ENCODE measurements at regions of chr12 and their contacts with region 1.

Region 1: GRCh38 chr12:459430-460258 is at the start of gene B4GALNT3:
- DNase-seq: peak; percentile 70
- H3K4me3 ChIP-seq: peak within 1 kb of the TSS; percentile 50 to 74 (median 66)
- H3K27ac ChIP-seq: peak within 1 kb of the TSS; percentile 59 to 83 (median 78)
- H3K4me1 ChIP-seq: peaks cover 2 to 36% (median 19%) of the 10 kb centered on the region in 4 donors
- H3K27me3 ChIP-seq: peaks cover 42% of the 10 kb centered on the region
- CTCF ChIP-seq: no peak
- EP300 ChIP-seq: no peak
- POLR2A ChIP-seq: peak; percentile 64
- total RNA-seq, gene B4GALNT3: 49.8 to 166 (median 93.4) TPM

Region 2: GRCh38 chr12:219891-220352 is 239.7 kb before region 1 on chr12:
- in situ Hi-C with region 1: no loop called
- intact Hi-C with region 1: no loop called
- DNase-seq: peak; percentile 74
- H3K4me3 ChIP-seq: no peak overlapping the region
- H3K27ac ChIP-seq: no peak overlapping the region
- H3K4me1 ChIP-seq: no peaks in the 10 kb centered on the region
- H3K27me3 ChIP-seq: no peaks in the 10 kb centered on the region
- CTCF ChIP-seq: peak; percentile 54 to 84 (median 69)
- EP300 ChIP-seq: no peak
- POLR2A ChIP-seq: no peak

Region 3: DNA sequence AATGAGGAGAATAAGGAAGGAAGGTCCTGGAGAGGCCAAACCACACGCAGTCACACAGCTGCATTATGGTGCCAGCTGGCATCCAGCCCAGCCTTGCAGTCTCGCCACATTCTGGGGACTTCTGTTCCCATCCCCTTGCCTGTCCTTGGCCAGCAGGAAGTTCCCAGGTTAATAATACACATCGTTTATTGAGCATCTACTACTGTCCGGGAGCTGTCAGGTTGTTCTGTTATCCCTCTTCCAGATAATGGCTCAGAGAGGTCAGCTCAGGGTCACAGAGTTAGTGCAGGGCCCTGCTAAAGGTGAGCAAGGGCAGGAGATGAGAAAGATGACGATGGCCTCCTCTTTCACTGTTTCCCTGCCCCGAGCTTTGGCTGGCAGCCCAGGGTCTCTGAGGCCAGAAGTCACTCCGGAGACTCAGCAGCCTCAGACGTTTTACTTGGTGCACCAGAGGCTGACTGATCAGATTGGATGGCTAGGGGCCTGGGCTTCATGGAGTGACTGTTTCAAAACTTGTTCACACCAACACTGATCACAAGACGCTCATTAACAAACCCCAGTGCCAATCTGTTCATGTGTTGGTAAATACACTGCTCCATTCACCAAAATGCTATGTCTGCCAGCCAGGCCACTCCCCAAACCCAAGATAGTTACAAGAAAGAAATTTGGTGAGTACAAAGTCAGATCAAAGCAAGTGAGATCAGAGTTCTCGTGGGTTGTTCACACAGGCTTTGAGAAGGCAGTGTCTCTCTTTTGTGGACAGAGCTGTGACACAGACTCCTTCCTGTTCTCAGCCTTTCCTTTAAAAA is 79.3 kb after region 1 on chr12:
- in situ Hi-C with region 1: loop called in 2 of 4 experiments (anchors 5 to 10 kb)
- intact Hi-C with region 1: no loop called
- DNase-seq: peak; percentile 90
- H3K4me3 ChIP-seq: no peak overlapping the region
- H3K27ac ChIP-seq: peak overlapping the region; percentile 84 to 90 (median 88)
- H3K4me1 ChIP-seq: peaks cover 14 to 54% (median 32%) of the 10 kb centered on the region in 4 donors
- H3K27me3 ChIP-seq: no peaks in the 10 kb centered on the region
- CTCF ChIP-seq: no peak
- EP300 ChIP-seq: peak; percentile 15
- POLR2A ChIP-seq: peak; percentile 29